WTC11 (cell line): ENCODE measurements at regions of chr16 and their contacts with region 1.

Region 1: DNA sequence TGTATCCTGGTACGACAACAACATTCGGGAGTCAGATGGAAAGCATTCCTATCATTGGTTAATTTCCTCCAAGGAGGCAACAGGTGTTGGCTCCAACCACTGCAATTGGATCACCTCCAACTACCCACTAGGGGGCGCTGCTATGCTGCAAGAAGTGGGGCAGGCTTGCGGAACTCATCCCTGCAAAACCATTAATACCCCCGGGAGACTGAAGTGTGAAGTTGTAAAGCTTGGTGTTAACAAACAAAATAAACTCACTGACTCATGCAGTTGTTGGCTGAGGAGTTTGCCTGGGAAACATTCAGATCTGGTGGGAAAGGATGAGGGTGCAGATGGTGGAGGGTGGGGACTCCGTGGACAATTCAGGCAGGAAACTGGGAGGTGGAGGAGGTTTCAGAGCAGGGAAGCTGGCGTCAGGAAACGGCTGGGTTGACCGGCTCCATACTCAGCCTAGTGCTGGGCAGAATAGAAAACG is 84.9 kb downstream of the HS3ST2 start:
- DNase-seq: peak; percentile 91
- ATAC-seq: peak; percentile 95
- H3K4me3 Mint-ChIP-seq: no peak overlapping the region
- H3K27ac Mint-ChIP-seq: no peak overlapping the region
- H3K4me1 Mint-ChIP-seq: no peaks in the 10 kb centered on the region
- H3K27me3 Mint-ChIP-seq: no peaks in the 10 kb centered on the region
- CTCF ChIP-seq: peak; percentile 94

Region 2: DNA sequence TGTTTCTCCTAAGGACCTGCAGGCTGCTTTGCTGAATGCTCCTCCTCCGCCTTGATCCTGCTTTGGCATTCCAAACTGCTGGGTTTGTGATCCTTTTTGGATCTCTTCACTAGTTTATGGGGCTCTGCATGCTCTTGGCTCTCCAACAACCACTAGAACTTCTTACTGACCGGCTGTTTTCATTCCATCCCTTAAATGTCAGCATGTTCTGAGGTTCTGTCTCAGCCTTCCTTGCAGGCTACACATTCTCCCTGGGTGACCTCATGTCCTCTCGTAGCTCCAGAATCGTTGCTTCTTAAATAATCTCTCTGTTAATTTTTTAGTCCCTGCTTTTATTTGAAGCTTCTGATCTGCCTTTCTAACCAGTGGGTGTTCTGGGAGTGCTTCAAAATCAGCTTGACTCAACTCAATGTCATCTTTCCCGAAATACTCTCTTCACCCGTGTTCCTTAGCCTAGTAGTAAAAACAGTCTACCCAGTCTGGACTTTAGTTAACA is 204.0 kb before region 1 on chr16:
- CTCF ChIA-PET with region 1: no interaction called
- POLR2A ChIA-PET with region 1: no interaction called
- DNase-seq: no peak
- ATAC-seq: no peak
- H3K4me3 Mint-ChIP-seq: no peak overlapping the region
- H3K27ac Mint-ChIP-seq: no peak overlapping the region
- H3K4me1 Mint-ChIP-seq: no peaks in the 10 kb centered on the region
- H3K27me3 Mint-ChIP-seq: no peaks in the 10 kb centered on the region
- CTCF ChIP-seq: no peak

Region 3: GRCh38 chr16:22912654-22913053 is 13.7 kb after region 1 on chr16:
- CTCF ChIA-PET with region 1: interaction called, 19 read pairs
- POLR2A ChIA-PET with region 1: no interaction called
- DNase-seq: peak; percentile 58
- ATAC-seq: peak; percentile 90
- H3K4me3 Mint-ChIP-seq: no peak overlapping the region
- H3K27ac Mint-ChIP-seq: no peak overlapping the region
- H3K4me1 Mint-ChIP-seq: peaks cover 3% of the 10 kb centered on the region
- H3K27me3 Mint-ChIP-seq: no peaks in the 10 kb centered on the region
- CTCF ChIP-seq: no peak

Region 4: DNA sequence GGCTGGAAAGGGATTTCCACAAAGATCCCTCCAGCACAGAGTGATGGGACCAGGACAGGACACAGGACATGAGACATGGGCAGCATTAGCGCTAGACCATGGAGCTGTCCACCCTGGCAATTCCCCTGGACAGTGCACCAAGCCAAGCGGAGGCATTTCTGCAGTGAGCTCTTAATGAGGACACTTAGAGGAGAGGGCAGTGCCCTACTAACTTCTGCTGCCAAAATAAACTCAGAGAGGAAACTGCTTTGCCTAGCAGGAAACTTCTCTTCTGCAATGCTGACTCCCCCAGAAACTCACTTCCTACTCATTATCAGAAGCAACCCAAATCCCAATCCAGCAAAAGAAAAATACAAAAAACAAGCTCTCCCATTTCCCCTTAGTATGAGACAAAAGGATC is 34.3 kb after region 1 on chr16:
- CTCF ChIA-PET with region 1: interaction called, 18 read pairs
- POLR2A ChIA-PET with region 1: no interaction called
- DNase-seq: no peak
- ATAC-seq: no peak
- H3K4me3 Mint-ChIP-seq: no peak overlapping the region; the same call in 1 of the 2 replicates
- H3K27ac Mint-ChIP-seq: peak overlapping the region; percentile 29
- H3K4me1 Mint-ChIP-seq: peaks cover 36% of the 10 kb centered on the region
- H3K27me3 Mint-ChIP-seq: no peaks in the 10 kb centered on the region
- CTCF ChIP-seq: no peak

Region 5: DNA sequence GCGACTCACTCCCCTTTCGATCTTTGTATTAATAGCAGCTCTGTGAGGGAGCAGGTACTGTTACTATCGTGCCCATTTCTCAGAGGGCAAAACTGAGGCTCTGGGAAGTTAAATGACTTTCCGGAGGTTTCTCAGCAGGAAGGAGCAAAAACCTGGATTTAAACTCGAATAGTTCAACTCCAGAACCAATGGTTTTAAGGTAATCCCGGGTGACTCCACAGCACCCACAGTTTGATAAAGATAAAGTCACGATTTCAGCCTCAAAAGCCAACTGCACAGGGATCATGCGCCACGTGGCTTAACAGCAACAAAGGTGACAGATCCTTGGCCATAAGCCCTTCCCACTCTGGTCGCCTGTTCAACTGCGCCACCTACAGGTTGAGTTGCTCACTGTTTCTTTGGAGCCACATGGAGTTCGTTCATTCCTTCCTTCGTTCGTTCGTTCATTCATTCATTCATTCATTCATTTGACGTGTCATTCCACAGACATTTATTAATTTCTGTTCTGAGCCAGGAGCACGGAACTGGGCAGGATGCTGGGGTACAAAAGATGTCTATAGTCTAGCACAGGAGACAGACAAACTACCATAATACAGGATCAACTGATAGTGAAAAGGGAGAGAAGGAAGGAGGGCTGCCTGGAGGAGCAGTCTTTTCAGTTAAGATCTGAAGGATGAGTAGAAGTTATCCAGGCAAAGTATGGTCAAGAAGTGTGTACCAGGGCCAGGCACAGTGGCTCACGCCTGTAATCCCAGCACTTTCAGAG is 49.9 kb after region 1 on chr16:
- CTCF ChIA-PET with region 1: interaction called, 29 read pairs
- POLR2A ChIA-PET with region 1: no interaction called
- DNase-seq: peak; percentile 88
- ATAC-seq: peak; percentile 85
- H3K4me3 Mint-ChIP-seq: peak overlapping the region; percentile 36
- H3K27ac Mint-ChIP-seq: no peak overlapping the region
- H3K4me1 Mint-ChIP-seq: peaks cover 13% of the 10 kb centered on the region
- H3K27me3 Mint-ChIP-seq: peaks cover 27% of the 10 kb centered on the region
- CTCF ChIP-seq: peak; percentile 71

Region 6: GRCh38 chr16:22977294-22977697 is 78.4 kb after region 1 on chr16:
- CTCF ChIA-PET with region 1: interaction called, 138 read pairs
- POLR2A ChIA-PET with region 1: no interaction called
- DNase-seq: no peak
- ATAC-seq: peak; percentile 60
- H3K4me3 Mint-ChIP-seq: no peak overlapping the region
- H3K27ac Mint-ChIP-seq: no peak overlapping the region
- H3K4me1 Mint-ChIP-seq: peaks cover 11% of the 10 kb centered on the region
- H3K27me3 Mint-ChIP-seq: no peaks in the 10 kb centered on the region
- CTCF ChIP-seq: no peak

Region 7: DNA sequence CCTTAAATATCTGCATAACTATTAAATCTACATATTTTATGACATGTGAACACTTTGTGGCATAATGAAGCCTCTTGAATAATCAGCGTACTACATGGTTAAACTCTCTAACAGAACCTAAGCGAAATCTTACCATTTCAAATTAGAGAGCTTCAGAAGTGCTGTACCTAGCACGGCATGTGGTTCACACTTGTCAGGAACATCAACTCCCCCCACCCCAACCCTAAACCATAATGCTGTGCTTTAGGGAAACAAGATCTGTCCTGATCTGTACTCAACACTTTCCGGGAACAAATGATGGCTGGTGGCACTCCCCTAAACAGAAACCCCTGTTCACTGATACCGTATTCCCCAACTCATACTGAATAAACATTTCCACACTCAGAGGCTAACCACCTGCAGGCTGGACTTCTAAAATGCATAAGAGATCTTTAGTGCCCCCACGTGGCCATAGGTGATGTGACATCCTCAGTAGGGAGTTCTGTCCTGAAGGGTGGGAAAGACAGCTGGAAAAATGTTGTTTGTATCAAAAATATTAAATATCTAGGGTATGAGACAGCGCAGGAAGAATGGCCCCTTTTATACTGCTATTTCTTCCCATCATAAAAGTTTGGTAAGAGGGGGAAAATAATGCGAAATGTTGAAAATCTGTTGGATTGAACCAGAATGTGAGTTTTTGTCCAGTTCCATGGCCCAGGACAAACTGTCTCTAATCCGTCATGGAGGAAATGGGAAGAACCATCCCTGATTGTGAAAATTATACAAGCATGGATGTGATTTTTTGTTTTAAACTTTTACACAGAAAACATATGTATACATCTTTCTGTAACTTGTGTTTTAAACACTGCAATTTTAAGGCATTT is 161.8 kb after region 1 on chr16:
- CTCF ChIA-PET with region 1: interaction called, 41 read pairs
- POLR2A ChIA-PET with region 1: interaction called, 4 read pairs
- DNase-seq: peak; percentile 78
- ATAC-seq: peak; percentile 89
- H3K4me3 Mint-ChIP-seq: no peak overlapping the region
- H3K27ac Mint-ChIP-seq: no peak overlapping the region
- H3K4me1 Mint-ChIP-seq: peaks cover 23% of the 10 kb centered on the region
- H3K27me3 Mint-ChIP-seq: no peaks in the 10 kb centered on the region
- CTCF ChIP-seq: peak; percentile 77